Motor neuron (in vitro differentiated cells): ENCODE measurements at regions of chr21 and their contacts with region 1.

Region 1: GRCh38 chr21:14737922-14738321 is 191.8 kb upstream of the SAMSN1 start:
- ATAC-seq: peak in 3 of 8 experiments; percentile 61 to 65 (median 64)
- H3K4me3 ChIP-seq: no peak overlapping the region
- H3K27ac ChIP-seq: no peak overlapping the region
- H3K4me1 ChIP-seq: no peaks in the 10 kb centered on the region

Region 2: DNA sequence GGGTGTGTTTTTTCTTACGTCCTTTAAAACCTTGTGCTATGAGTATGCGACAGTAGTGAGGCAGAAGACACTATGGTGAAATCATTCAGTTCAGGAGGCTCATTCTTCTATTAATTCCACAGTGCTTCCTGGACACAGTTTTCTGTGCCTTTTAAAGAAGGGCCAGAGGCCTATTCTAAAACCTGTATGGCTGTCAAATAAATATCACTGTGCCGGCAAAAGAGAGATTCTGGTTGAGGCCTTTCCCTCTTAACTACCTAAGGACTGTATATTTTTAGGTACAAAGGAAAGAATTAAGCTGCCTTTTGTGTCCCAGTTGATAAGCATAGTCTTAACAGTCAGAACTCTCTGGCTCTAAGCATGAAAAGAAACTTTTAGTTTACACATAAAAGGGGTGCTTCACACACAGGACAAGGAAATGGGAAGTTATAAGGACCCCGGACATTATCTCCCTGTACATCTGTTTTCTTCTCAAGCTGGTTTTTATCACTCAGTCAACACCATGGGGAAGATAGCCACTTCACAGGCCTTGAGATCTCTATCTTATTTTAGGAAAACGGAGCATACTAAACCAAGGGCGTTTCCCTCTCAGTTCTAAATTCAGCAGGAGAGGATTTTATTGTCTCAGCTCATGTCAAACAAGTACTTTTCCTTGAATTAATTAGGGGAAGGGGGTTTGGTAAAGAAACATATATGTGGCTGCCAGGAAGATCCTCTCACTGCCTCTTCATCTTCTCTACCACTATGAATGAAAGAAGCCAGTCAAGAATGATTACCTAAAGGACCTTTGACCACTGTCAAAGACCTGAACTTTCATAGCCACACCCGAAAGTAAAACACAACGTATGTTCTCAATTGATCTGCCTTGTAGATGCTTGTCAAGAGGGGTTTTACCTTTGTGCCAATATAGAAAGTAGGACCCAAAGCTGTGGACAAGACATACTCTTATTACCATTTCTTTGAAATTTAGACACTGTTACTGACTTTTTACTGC is 283.6 kb before region 1 on chr21:
- in situ Hi-C with region 1: loop called in 1 of 9 experiments (anchors 25 kb)
- ATAC-seq: peak in 6 of 8 experiments; percentile 12 to 86 (median 74)
- H3K4me3 ChIP-seq: no peak overlapping the region
- H3K27ac ChIP-seq: peak overlapping the region in 1 of 2 donors; percentile 24
- H3K4me1 ChIP-seq: peaks cover 13 to 39% of the 10 kb centered on the region in 2 donors

Region 3: GRCh38 chr21:14836950-14837349 is 99.0 kb after region 1 on chr21:
- in situ Hi-C with region 1: no loop called
- ATAC-seq: no peak
- H3K4me3 ChIP-seq: no peak overlapping the region
- H3K27ac ChIP-seq: no peak overlapping the region
- H3K4me1 ChIP-seq: peaks cover 0 to 3% of the 10 kb centered on the region in 2 donors